Common myeloid progenitor, CD34-positive (primary cell): ENCODE measurements at regions of chr12 and their contacts with region 1.

Region 1: GRCh38 chr12:68331869-68332727 is at the start of gene MDM1:
- DNase-seq: peak; percentile 98
- H3K4me3 ChIP-seq: peak within 1 kb of the TSS; percentile 68 to 91 (median 85)
- H3K27ac ChIP-seq: peak within 1 kb of the TSS; percentile 42 to 77
- H3K4me1 ChIP-seq: peaks cover 20 to 44% (median 32%) of the 10 kb centered on the region in 4 experiments
- H3K27me3 ChIP-seq: no peaks in the 10 kb centered on the region

Region 2: GRCh38 chr12:68306564-68306963 is 25.5 kb before region 1 on chr12:
- CTCF ChIA-PET with region 1: no interaction called
- POLR2A ChIA-PET with region 1: no interaction called
- DNase-seq: no peak
- H3K4me3 ChIP-seq: no peak overlapping the region
- H3K27ac ChIP-seq: no peak overlapping the region
- H3K4me1 ChIP-seq: no peaks in the 10 kb centered on the region
- H3K27me3 ChIP-seq: no peaks in the 10 kb centered on the region

Region 3: GRCh38 chr12:68317047-68317667 is 14.9 kb before region 1 on chr12:
- CTCF ChIA-PET with region 1: interaction called, 10 read pairs
- POLR2A ChIA-PET with region 1: interaction called, 3 read pairs
- DNase-seq: peak; percentile 63 to 84 (median 80)
- H3K4me3 ChIP-seq: no peak overlapping the region
- H3K27ac ChIP-seq: no peak overlapping the region
- H3K4me1 ChIP-seq: no peaks in the 10 kb centered on the region
- H3K27me3 ChIP-seq: no peaks in the 10 kb centered on the region

Region 4: DNA sequence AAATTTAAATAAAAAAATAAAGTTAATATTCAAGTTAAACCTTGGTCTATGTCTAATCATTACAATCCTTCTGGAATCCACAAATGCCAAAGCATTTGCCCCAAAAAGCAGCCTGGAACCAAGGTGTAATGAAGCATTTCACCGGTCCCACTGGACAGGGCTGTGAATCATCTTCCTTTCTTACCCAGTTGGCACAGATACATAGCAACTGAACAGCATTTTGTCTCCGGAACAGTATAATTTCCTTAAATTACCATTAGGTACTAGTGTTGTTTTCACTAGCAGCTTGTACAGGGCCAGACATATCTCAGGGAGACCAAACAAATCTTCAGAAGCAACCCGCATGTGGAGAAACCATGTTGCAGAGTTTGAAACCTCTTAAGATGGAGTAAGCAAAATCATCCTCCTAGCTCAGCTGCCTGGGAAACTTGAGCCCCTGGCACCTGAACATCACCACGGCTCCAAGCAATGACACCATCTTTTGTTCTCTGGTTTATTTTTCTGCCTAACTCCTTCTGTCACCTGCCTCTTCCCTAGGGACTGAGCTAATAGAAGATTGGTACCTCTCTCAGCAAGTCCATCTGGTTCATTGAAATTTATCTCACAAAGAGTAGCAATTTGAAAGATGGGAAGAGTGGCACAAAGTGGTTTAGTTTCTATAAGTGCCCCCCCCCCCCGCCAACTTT is 18.0 kb after region 1 on chr12:
- CTCF ChIA-PET with region 1: interaction called, 13 read pairs
- POLR2A ChIA-PET with region 1: interaction called, 3 read pairs
- DNase-seq: no peak
- H3K4me3 ChIP-seq: no peak overlapping the region
- H3K27ac ChIP-seq: no peak overlapping the region
- H3K4me1 ChIP-seq: peaks cover 0 to 4% (median 1%) of the 10 kb centered on the region in 4 experiments
- H3K27me3 ChIP-seq: no peaks in the 10 kb centered on the region

Region 5: GRCh38 chr12:68358532-68359485 is 26.7 kb after region 1 on chr12:
- CTCF ChIA-PET with region 1: interaction called, 13 read pairs
- POLR2A ChIA-PET with region 1: no interaction called
- DNase-seq: peak; percentile 83 to 90 (median 89)
- H3K4me3 ChIP-seq: no peak overlapping the region
- H3K27ac ChIP-seq: peak overlapping the region in 1 of 2 experiments; percentile 57
- H3K4me1 ChIP-seq: peaks cover 17 to 60% (median 45%) of the 10 kb centered on the region in 4 experiments
- H3K27me3 ChIP-seq: no peaks in the 10 kb centered on the region

Region 6: GRCh38 chr12:68648179-68648578 is 316.1 kb after region 1 on chr12:
- CTCF ChIA-PET with region 1: interaction called, 19 read pairs
- POLR2A ChIA-PET with region 1: interaction called, 3 read pairs
- DNase-seq: no peak
- H3K4me3 ChIP-seq: no peak overlapping the region
- H3K27ac ChIP-seq: no peak overlapping the region
- H3K4me1 ChIP-seq: peaks cover 0 to 6% (median 0%) of the 10 kb centered on the region in 4 experiments
- H3K27me3 ChIP-seq: no peaks in the 10 kb centered on the region